Natural killer cell (primary cell): ENCODE measurements at regions of chr18 and their contacts with region 1.

Region 1: GRCh38 chr18:79068937-79069791 is at the start of gene ATP9B:
- DNase-seq: peak; percentile 100
- ATAC-seq: peak; percentile 76 to 89 (median 82)
- H3K4me3 ChIP-seq: peak within 1 kb of the TSS; percentile 54
- H3K4me3 Mint-ChIP-seq: peak within 1 kb of the TSS; percentile 85
- H3K27ac ChIP-seq: peak within 1 kb of the TSS; percentile 94
- H3K27ac Mint-ChIP-seq: peak within 1 kb of the TSS; percentile 85 to 94
- H3K4me1 ChIP-seq: peaks cover 14% of the 10 kb centered on the region
- H3K4me1 Mint-ChIP-seq: peaks cover 36 to 58% of the 10 kb centered on the region in 2 donors
- H3K27me3 ChIP-seq: no peaks in the 10 kb centered on the region
- H3K27me3 Mint-ChIP-seq: peaks cover 0 to 15% of the 10 kb centered on the region in 2 donors
- CTCF ChIP-seq: no peak
- total RNA-seq, gene ATP9B: 66.0 to 78.9 (median 68.0) TPM

Region 2: GRCh38 chr18:79139206-79139605 is 70.0 kb after region 1 on chr18:
- intact Hi-C with region 1: loop called (anchors 5 kb)
- DNase-seq: peak; percentile 47 to 70
- ATAC-seq: peak; percentile 95 to 99 (median 97)
- H3K4me3 ChIP-seq: no peak overlapping the region
- H3K4me3 Mint-ChIP-seq: no peak overlapping the region
- H3K27ac ChIP-seq: no peak overlapping the region
- H3K27ac Mint-ChIP-seq: peak overlapping the region; percentile 83 to 84
- H3K4me1 ChIP-seq: peaks cover 2% of the 10 kb centered on the region
- H3K4me1 Mint-ChIP-seq: peaks cover 10 to 20% of the 10 kb centered on the region in 2 donors
- H3K27me3 ChIP-seq: no peaks in the 10 kb centered on the region
- H3K27me3 Mint-ChIP-seq: no peaks in the 10 kb centered on the region
- CTCF ChIP-seq: no peak

Region 3: DNA sequence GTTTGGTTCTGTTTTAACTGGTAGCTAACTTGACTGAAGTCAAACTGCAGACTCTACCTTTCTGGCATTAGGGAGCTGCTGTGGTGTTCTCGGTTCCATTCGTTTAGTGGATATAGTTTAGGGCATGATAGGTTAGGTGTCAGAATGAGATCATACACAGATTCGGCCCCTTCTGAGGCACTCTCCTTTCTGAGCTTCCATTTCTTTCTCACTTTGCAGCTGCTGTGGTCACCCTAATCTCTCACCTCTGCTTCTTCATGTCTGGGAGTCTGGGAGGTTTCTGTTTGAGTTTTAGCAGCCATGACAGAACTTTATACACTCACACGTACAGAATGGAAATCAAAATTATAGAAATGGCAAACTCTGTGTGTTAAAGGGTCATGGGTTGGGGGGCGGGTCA is 122.8 kb after region 1 on chr18:
- intact Hi-C with region 1: loop called (anchors 2 kb)
- DNase-seq: peak; percentile 30 to 33
- ATAC-seq: peak; percentile 90 to 98 (median 96)
- H3K4me3 ChIP-seq: no peak overlapping the region
- H3K4me3 Mint-ChIP-seq: peak overlapping the region; percentile 67
- H3K27ac ChIP-seq: no peak overlapping the region
- H3K27ac Mint-ChIP-seq: peak overlapping the region; percentile 82 to 89
- H3K4me1 ChIP-seq: peaks cover 5% of the 10 kb centered on the region
- H3K4me1 Mint-ChIP-seq: peaks cover 18 to 22% of the 10 kb centered on the region in 2 donors
- H3K27me3 ChIP-seq: no peaks in the 10 kb centered on the region
- H3K27me3 Mint-ChIP-seq: no peaks in the 10 kb centered on the region
- CTCF ChIP-seq: no peak

Region 4: DNA sequence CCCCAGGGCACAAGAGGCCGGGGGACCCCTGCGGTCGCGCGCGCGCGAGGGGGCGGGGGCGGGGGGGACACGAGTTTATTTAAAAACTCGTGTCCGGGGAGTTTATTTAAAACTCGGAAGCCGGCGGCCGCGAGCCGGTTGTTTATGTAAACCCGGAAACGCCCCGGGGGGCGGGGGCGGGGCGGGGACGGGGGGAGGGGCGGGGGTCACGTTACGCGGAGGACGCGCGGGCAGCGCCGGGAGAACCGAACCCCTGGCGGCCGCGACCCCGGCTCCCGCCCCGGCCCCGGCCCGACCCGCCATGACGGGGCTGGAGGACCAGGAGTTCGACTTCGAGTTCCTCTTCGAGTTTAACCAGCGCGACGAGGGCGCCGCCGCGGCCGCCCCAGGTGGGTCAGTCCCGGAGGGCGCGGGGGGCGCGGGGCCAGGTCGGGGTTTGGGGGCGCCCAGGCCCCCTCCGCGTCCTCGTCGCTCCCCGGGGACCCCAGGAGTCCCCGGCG is 331.0 kb after region 1 on chr18:
- intact Hi-C with region 1: loop called (anchors 5 kb)
- DNase-seq: peak; percentile 53 to 75
- ATAC-seq: peak; percentile 41 to 68 (median 68)
- H3K4me3 ChIP-seq: peak overlapping the region; percentile 54
- H3K4me3 Mint-ChIP-seq: no peak overlapping the region
- H3K27ac ChIP-seq: peak overlapping the region; percentile 62
- H3K27ac Mint-ChIP-seq: no peak overlapping the region
- H3K4me1 ChIP-seq: peaks cover 69% of the 10 kb centered on the region
- H3K4me1 Mint-ChIP-seq: peaks cover 44 to 58% of the 10 kb centered on the region in 2 donors
- H3K27me3 ChIP-seq: peaks cover 8% of the 10 kb centered on the region
- H3K27me3 Mint-ChIP-seq: no peaks in the 10 kb centered on the region
- CTCF ChIP-seq: no peak

Region 5: GRCh38 chr18:79679111-79679872 is 610.1 kb after region 1 on chr18 and contains the start of gene CTDP1:
- intact Hi-C with region 1: loop called (anchors 5 kb)
- DNase-seq: peak; percentile 98 to 99
- ATAC-seq: peak; percentile 86 to 95 (median 86)
- H3K4me3 ChIP-seq: peak within 1 kb of the TSS; percentile 100
- H3K4me3 Mint-ChIP-seq: peak within 1 kb of the TSS; percentile 91
- H3K27ac ChIP-seq: peak within 1 kb of the TSS; percentile 100
- H3K27ac Mint-ChIP-seq: peak within 1 kb of the TSS; percentile 96 to 99
- H3K4me1 ChIP-seq: peaks cover 48% of the 10 kb centered on the region
- H3K4me1 Mint-ChIP-seq: peaks cover 46 to 51% of the 10 kb centered on the region in 2 donors
- H3K27me3 ChIP-seq: no peaks in the 10 kb centered on the region
- H3K27me3 Mint-ChIP-seq: no peaks in the 10 kb centered on the region
- CTCF ChIP-seq: no peak
- total RNA-seq, gene CTDP1: 66.9 to 89.4 (median 77.1) TPM